Activated T-helper 2 cell treated with anti-CD3 and anti-CD28 coated beads, Interferon-gamma antibody, Interleukin-2, Interleukin-4, amounts not matched to agents 10 μg/mL and 5 μg/mL and 100 μg/mL, durations not matched to agents 14 hours and 24 hours and 36 hours (primary cell): ENCODE measurements at regions of chr14 and their contacts with region 1.

Region 1: DNA sequence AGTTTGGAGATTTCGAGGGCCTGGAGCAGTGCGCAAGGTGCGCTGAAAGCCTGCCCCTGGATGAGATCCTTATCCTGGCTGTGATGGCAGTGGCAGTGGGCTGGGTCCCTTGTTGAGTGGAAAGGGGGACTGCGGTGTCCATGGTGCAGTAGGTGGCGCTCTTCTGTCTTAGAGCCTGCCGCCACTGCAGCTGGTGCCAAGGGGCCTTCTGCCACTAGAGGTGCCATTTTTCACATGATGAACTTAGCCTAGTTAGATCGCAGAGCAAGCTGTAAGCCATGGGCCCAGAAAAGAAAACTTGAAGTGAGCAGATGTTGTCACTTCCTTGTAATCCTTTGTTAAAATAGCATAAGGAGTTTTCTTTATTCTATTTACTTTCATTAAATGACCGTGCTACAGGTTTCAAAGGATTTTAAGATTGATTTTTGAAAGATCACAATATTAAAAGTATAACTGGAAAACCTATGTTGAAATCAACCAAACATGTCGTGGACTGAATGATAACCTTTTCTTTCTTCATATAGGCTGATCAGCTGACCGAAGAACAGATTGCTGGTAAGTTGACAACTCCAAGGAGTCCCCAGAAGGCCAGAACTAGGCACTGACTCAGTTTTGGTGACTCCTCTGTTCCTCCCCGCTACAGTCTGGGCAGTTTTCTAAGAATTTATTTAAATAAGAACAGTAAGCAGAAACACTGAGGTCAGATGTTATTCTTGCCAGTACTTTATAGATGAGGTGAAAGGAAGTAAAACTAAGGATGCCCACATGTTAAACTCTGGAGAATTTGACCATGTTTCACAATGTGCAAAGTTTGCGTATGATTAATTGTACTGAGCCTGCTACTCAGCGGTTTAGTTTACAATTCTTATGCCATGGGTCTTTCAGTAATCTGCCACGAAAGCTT is 3.0 kb downstream of the CALM1 start:
- DNase-seq: peak; percentile 82
- H3K4me3 Mint-ChIP-seq: peak overlapping the region; percentile 94
- H3K27ac Mint-ChIP-seq: peak overlapping the region; percentile 97
- H3K4me1 Mint-ChIP-seq: peaks cover 48% of the 10 kb centered on the region
- H3K27me3 Mint-ChIP-seq: peaks cover 1% of the 10 kb centered on the region

Region 2: GRCh38 chr14:89954070-89955028 is 445.4 kb before region 1 on chr14 and contains the start of gene EFCAB11:
- intact Hi-C with region 1: loop called (anchors 2 kb)
- DNase-seq: peak; percentile 96
- H3K4me3 Mint-ChIP-seq: peak within 1 kb of the TSS; percentile 87
- H3K27ac Mint-ChIP-seq: peak within 1 kb of the TSS; percentile 81
- H3K4me1 Mint-ChIP-seq: peaks cover 43% of the 10 kb centered on the region
- H3K27me3 Mint-ChIP-seq: no peaks in the 10 kb centered on the region
- total RNA-seq, gene EFCAB11: 7.1 and 9.0 TPM in 2 replicates

Region 3: GRCh38 chr14:90256354-90257131 is 143.2 kb before region 1 on chr14 and contains the start of gene PSMC1:
- intact Hi-C with region 1: loop called (anchors 1 kb)
- DNase-seq: peak; percentile 83
- H3K4me3 Mint-ChIP-seq: peak within 1 kb of the TSS; percentile 98
- H3K27ac Mint-ChIP-seq: peak within 1 kb of the TSS; percentile 93
- H3K4me1 Mint-ChIP-seq: peaks cover 19% of the 10 kb centered on the region
- H3K27me3 Mint-ChIP-seq: no peaks in the 10 kb centered on the region
- total RNA-seq, gene PSMC1: 162 and 167 TPM in 2 replicates

Region 4: DNA sequence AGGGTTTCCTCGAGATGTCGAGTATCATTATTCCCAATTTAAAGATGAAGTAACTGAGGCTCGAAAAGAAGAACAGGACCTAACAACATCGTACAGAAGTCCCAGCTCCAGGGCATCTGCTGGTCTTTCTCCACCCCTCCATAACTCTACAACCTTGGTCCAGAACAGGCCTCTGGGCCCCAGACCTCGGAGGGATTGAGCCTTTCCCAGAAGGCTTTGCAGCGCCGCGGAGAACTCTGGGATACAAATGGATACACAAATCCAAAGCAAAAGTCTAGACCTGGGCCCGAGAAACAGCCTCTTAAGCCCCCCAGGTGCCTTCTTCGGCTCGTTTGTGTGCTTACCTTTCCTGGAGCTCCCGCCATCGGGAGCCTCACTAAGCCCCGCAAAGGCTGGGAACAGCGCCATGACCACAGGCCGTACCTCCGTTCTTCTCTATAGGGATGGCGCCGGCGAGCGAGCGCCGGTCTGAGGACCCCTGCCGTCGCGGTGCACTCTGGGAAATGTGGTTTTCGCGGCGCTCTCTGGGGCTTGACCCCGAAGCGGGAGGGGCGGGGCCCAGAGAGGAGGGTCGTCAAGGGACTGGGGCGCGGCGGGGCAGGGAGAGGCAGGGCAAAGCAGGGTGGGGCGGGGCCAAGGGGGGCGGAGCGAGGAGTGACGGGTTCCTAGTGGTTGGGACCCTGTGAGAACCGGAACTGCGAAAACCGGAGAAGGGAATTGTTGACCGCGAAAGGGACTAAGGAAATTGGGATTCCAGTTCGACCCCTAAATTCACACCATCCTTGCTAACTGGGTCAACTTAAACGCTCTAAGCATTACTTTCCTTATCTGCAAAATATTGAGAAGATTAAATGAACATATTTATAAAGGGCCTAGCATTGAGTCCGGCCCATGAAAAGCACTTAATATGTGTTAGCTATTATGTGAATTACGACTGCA is 68.0 kb before region 1 on chr14 and contains the start of gene NRDE2:
- intact Hi-C with region 1: loop called (anchors 1 kb)
- DNase-seq: peak; percentile 91
- H3K4me3 Mint-ChIP-seq: peak within 1 kb of the TSS; percentile 89
- H3K27ac Mint-ChIP-seq: peak within 1 kb of the TSS; percentile 93
- H3K4me1 Mint-ChIP-seq: peaks cover 29% of the 10 kb centered on the region
- H3K27me3 Mint-ChIP-seq: peaks cover 20% of the 10 kb centered on the region
- total RNA-seq, gene NRDE2: 23.2 and 25.4 TPM in 2 replicates

Region 5: GRCh38 chr14:90624223-90624622 is 224.4 kb after region 1 on chr14:
- intact Hi-C with region 1: no loop called
- DNase-seq: no peak
- H3K4me3 Mint-ChIP-seq: no peak overlapping the region
- H3K27ac Mint-ChIP-seq: no peak overlapping the region
- H3K4me1 Mint-ChIP-seq: no peaks in the 10 kb centered on the region
- H3K27me3 Mint-ChIP-seq: no peaks in the 10 kb centered on the region

Region 6: GRCh38 chr14:90677484-90678050 is 277.8 kb after region 1 on chr14:
- intact Hi-C with region 1: loop called (anchors 5 kb)
- DNase-seq: no peak
- H3K4me3 Mint-ChIP-seq: peak overlapping the region; percentile 59
- H3K27ac Mint-ChIP-seq: peak overlapping the region; percentile 92
- H3K4me1 Mint-ChIP-seq: peaks cover 40% of the 10 kb centered on the region
- H3K27me3 Mint-ChIP-seq: peaks cover 3% of the 10 kb centered on the region

Region 7: GRCh38 chr14:90697577-90698206 is 297.9 kb after region 1 on chr14:
- intact Hi-C with region 1: loop called (anchors 1 kb)
- DNase-seq: peak; percentile 57
- H3K4me3 Mint-ChIP-seq: no peak overlapping the region
- H3K27ac Mint-ChIP-seq: no peak overlapping the region
- H3K4me1 Mint-ChIP-seq: peaks cover 6% of the 10 kb centered on the region
- H3K27me3 Mint-ChIP-seq: no peaks in the 10 kb centered on the region

Region 8: DNA sequence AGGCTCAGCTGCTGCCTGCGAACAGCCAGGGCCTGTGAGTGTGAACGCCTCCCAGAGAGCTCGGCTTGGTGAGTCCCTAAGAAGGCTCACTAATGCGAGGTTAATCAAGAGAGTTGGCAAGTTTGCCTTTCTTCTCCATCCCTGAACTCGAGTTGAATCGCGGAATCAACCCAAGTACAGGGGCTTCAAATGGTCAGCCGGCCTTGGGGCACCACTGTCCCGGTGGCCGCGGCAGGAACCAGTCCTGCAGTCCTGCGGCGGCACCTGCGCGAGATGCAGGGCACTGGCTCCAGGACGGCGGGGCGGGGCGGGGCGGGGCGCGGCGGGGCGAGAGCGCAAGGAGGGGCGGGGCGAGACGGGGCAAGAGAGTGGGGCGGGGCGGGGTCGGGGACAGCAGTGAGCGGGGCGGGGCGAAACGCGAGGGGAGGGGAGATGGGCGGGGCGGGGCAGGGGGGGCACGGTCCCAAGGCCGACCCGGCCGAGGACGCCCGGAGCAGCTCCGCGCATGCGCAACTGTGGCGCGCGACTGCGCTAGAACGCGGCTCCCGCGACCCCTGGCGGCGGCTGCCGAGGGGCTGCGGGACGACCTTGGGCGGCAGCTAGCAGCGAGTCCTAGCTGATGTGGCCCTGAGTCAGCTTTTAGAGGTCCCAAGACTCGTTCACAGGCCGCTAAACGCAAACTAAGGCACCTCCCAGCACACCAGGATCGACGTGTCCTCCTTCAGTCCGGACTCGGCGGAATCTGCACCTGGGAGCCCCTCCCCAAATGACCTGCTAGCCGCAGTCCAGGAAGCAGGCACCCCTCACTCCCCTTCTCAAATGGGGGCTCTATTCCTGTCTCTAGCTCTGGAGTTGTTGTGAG is 358.5 kb after region 1 on chr14:
- intact Hi-C with region 1: loop called (anchors 1 kb)
- DNase-seq: peak; percentile 92
- H3K4me3 Mint-ChIP-seq: peak overlapping the region; percentile 70
- H3K27ac Mint-ChIP-seq: peak overlapping the region; percentile 68
- H3K4me1 Mint-ChIP-seq: peaks cover 18% of the 10 kb centered on the region
- H3K27me3 Mint-ChIP-seq: peaks cover 19% of the 10 kb centered on the region

Region 9: DNA sequence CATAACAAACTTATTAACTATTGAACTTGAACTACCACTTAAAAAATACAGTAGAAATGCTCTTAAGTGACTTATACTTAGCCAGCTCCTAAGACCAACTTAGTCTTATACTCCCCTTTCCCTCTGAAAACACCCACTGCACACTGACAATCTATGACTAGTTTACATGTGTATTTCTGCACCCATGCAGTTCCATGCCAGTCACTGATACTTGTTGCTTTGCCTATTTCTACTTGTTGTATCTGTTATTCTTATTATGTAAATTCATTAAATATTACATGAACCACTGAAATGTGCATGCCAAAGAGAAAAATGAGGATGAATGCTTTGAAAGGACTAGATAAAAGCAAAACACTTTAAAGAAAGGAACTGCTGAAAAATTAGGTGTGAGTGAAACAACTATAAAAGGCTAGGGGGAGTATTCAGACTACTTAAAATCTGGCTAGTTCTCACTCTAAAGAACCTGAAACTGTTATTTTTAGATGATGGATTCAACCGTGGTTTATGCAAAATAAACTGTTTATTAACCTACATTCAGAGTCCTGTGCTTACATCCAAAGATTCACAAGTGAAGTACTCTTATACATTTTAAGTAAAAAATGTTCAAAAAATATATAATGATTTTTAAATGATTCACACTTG is 585.9 kb after region 1 on chr14:
- intact Hi-C with region 1: no loop called
- DNase-seq: no peak
- H3K4me3 Mint-ChIP-seq: no peak overlapping the region
- H3K27ac Mint-ChIP-seq: no peak overlapping the region
- H3K4me1 Mint-ChIP-seq: peaks cover 24% of the 10 kb centered on the region
- H3K27me3 Mint-ChIP-seq: no peaks in the 10 kb centered on the region